ENCODE measurements at regions of chr6 and their contacts with region 1.

Region 1: GRCh38 chr6:99119109-99120031 is 171.6 kb upstream of the FBXL4 start:
- DNase-seq: peak; percentile 23
- ATAC-seq: peak; percentile 74
- H3K4me3 ChIP-seq: no peak overlapping the region
- H3K27ac ChIP-seq: no peak overlapping the region
- H3K4me1 ChIP-seq: no peaks in the 10 kb centered on the region
- H3K27me3 ChIP-seq: 0 out of 5 replicates have a peak, but pooled peaks cover 0 to 2% of the 10 kb centered on the region in 2 experiments
- CTCF ChIP-seq: peak; percentile 73
- EP300 ChIP-seq: no peak
- POLR2A ChIP-seq: no peak
- RAD21 ChIP-seq: no peak

Region 2: DNA sequence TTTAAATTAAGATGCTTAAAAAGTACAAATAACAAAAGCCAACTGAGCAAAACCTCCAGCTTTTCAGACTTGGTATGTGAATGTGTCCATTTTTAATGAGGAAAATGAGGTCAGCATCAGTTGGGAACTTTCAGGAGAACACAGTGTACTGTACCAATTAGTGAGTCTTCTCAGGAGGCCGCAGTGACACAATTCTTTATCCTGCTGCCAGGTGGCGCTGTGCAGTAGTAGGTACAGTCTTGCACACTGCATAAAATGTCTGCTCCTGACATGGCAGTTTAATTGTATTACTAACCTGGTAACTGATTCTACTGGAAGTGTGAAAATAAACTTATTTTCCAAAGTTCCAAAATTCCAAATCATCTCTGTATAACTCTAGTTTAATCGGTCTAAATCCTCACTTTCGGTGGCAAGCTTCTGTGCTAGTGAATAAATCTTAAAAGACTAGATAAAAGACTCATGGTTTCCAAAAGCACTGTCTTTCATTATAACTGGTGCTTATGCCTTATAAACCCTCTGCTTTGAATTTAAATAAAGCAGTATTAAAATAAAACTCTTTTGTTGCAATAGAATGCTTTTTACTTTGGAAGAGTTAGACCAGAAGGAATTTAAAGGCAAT is 1621.5 kb before region 1 on chr6:
- CTCF ChIA-PET with region 1: interaction called, 10 read pairs
- POLR2A ChIA-PET with region 1: no interaction called
- in situ Hi-C with region 1: loop called (anchors 25 kb)
- intact Hi-C with region 1: loop called (anchors 1 kb)
- DNase-seq: peak; percentile 59
- ATAC-seq: peak; percentile 99
- H3K4me3 ChIP-seq: no peak overlapping the region
- H3K27ac ChIP-seq: no peak overlapping the region
- H3K4me1 ChIP-seq: no peaks in the 10 kb centered on the region
- H3K27me3 ChIP-seq: no peaks in the 10 kb centered on the region
- CTCF ChIP-seq: peak; percentile 81
- EP300 ChIP-seq: no peak
- POLR2A ChIP-seq: no peak
- RAD21 ChIP-seq: peak; percentile 43; the same call in 1 of the 2 replicates

Region 3: GRCh38 chr6:98769544-98769943 is 349.8 kb before region 1 on chr6:
- CTCF ChIA-PET with region 1: no interaction called
- POLR2A ChIA-PET with region 1: no interaction called
- in situ Hi-C with region 1: no loop called
- intact Hi-C with region 1: loop called (anchors 1 kb)
- DNase-seq: peak; percentile 24
- ATAC-seq: peak; percentile 59
- H3K4me3 ChIP-seq: no peak overlapping the region
- H3K27ac ChIP-seq: no peak overlapping the region
- H3K4me1 ChIP-seq: no peaks in the 10 kb centered on the region
- H3K27me3 ChIP-seq: no peaks in the 10 kb centered on the region
- CTCF ChIP-seq: peak; percentile 28; the same call in 1 of the 2 replicates
- EP300 ChIP-seq: no peak
- POLR2A ChIP-seq: no peak
- RAD21 ChIP-seq: no peak

Region 4: GRCh38 chr6:99002831-99003230 is 116.5 kb before region 1 on chr6:
- CTCF ChIA-PET with region 1: no interaction called
- POLR2A ChIA-PET with region 1: no interaction called
- in situ Hi-C with region 1: no loop called
- intact Hi-C with region 1: no loop called
- DNase-seq: no peak
- ATAC-seq: no peak
- H3K4me3 ChIP-seq: no peak overlapping the region
- H3K27ac ChIP-seq: no peak overlapping the region
- H3K4me1 ChIP-seq: no peaks in the 10 kb centered on the region
- H3K27me3 ChIP-seq: no peaks in the 10 kb centered on the region
- CTCF ChIP-seq: no peak
- EP300 ChIP-seq: no peak
- POLR2A ChIP-seq: no peak
- RAD21 ChIP-seq: no peak

Region 5: GRCh38 chr6:99178168-99178567 is 58.8 kb after region 1 on chr6:
- CTCF ChIA-PET with region 1: no interaction called
- POLR2A ChIA-PET with region 1: no interaction called
- in situ Hi-C with region 1: no loop called
- intact Hi-C with region 1: no loop called
- DNase-seq: no peak
- ATAC-seq: no peak
- H3K4me3 ChIP-seq: no peak overlapping the region
- H3K27ac ChIP-seq: no peak overlapping the region
- H3K4me1 ChIP-seq: no peaks in the 10 kb centered on the region
- H3K27me3 ChIP-seq: no peaks in the 10 kb centered on the region
- CTCF ChIP-seq: no peak
- EP300 ChIP-seq: no peak
- POLR2A ChIP-seq: no peak
- RAD21 ChIP-seq: no peak